CD4-positive, alpha-beta memory T cell (primary cell): ENCODE measurements at regions of chr20 and their contacts with region 1.

Region 1: GRCh38 chr20:64038565-64039292 is 2.7 kb downstream of the C20orf204 start:
- DNase-seq: peak; percentile 65 to 76 (median 71)
- H3K4me3 ChIP-seq: peak overlapping the region; percentile 29 to 72
- H3K4me3 Mint-ChIP-seq: peak overlapping the region; percentile 17 to 82 (median 57)
- H3K27ac ChIP-seq: peak overlapping the region; percentile 35
- H3K27ac Mint-ChIP-seq: peak overlapping the region in 2 of 7 donors; percentile 43 to 69
- H3K4me1 ChIP-seq: peaks cover 74% of the 10 kb centered on the region
- H3K4me1 Mint-ChIP-seq: peaks cover 13 to 63% (median 34%) of the 10 kb centered on the region in 4 donors
- H3K27me3 ChIP-seq: no peaks in the 10 kb centered on the region
- H3K27me3 Mint-ChIP-seq: no peaks in the 10 kb centered on the region

Region 2: DNA sequence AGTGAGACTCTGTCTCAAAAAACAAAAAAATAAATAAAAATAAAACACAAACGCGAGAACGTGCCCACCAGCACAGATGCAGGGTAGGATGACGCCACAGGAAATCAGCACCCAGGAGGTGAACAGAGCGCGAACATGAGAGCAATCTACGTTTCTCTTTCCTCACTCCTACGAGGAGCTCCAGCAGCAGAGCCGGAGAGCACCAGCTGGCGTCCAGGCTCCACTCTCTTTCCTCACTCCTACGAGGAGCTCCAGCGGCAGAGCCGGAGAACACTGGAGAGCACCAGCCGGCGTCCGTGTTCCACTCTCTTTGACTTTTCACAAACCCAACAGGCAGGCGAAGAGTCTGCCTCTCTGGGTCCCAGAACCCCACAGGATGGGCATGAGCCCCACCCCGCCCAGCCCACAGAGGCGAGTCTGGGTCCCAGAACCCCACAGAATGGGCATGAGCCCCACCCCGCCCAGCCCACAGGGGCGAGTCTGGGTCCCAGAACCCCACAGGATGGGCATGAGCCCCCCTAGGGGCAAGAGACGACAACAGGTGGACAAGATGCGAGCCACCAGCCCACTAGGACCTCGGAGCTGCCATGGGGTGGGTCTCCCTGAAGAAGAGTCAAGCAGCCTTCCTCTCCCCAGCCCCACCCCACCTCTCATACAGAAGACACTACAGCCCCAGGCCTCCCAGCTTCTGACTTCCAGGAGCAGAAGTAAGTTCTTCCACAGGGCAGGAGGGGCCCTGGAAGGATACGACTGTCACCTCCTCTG is 227.8 kb before region 1 on chr20:
- CTCF ChIA-PET with region 1: no interaction called
- POLR2A ChIA-PET with region 1: no interaction called
- intact Hi-C with region 1: no loop called
- DNase-seq: no peak
- H3K4me3 ChIP-seq: no peak overlapping the region
- H3K4me3 Mint-ChIP-seq: no peak overlapping the region
- H3K27ac ChIP-seq: no peak overlapping the region
- H3K27ac Mint-ChIP-seq: peak overlapping the region in 1 of 7 donors; percentile 31
- H3K4me1 ChIP-seq: no peaks in the 10 kb centered on the region
- H3K4me1 Mint-ChIP-seq: no peaks in the 10 kb centered on the region
- H3K27me3 ChIP-seq: no peaks in the 10 kb centered on the region
- H3K27me3 Mint-ChIP-seq: peaks cover 0 to 2% of the 10 kb centered on the region in 2 donors

Region 3: GRCh38 chr20:63894358-63895201 is 144.1 kb before region 1 on chr20 and contains the start of gene DNAJC5:
- CTCF ChIA-PET with region 1: no interaction called
- POLR2A ChIA-PET with region 1: interaction called, 4 read pairs
- intact Hi-C with region 1: loop called (anchors 5 kb)
- DNase-seq: peak; percentile 95 to 98 (median 98)
- H3K4me3 ChIP-seq: peak within 1 kb of the TSS; percentile 68 to 81
- H3K4me3 Mint-ChIP-seq: peak within 1 kb of the TSS; percentile 92 to 99 (median 94)
- H3K27ac ChIP-seq: peak within 1 kb of the TSS; percentile 66
- H3K27ac Mint-ChIP-seq: peak within 1 kb of the TSS; percentile 93 to 99 (median 97)
- H3K4me1 ChIP-seq: peaks cover 45% of the 10 kb centered on the region
- H3K4me1 Mint-ChIP-seq: peaks cover 28 to 48% (median 40%) of the 10 kb centered on the region in 4 donors
- H3K27me3 ChIP-seq: no peaks in the 10 kb centered on the region
- H3K27me3 Mint-ChIP-seq: no peaks in the 10 kb centered on the region
- total RNA-seq, gene DNAJC5: 53.3 to 54.4 TPM

Region 4: GRCh38 chr20:64027981-64028685 is 10.6 kb before region 1 on chr20:
- CTCF ChIA-PET with region 1: interaction called, 11 read pairs
- POLR2A ChIA-PET with region 1: interaction called, 11 read pairs
- intact Hi-C with region 1: no loop called
- DNase-seq: no peak
- H3K4me3 ChIP-seq: no peak overlapping the region
- H3K4me3 Mint-ChIP-seq: no peak overlapping the region
- H3K27ac ChIP-seq: no peak overlapping the region
- H3K27ac Mint-ChIP-seq: peak overlapping the region in 2 of 7 donors; percentile 5 to 35
- H3K4me1 ChIP-seq: no peaks in the 10 kb centered on the region
- H3K4me1 Mint-ChIP-seq: no peaks in the 10 kb centered on the region
- H3K27me3 ChIP-seq: no peaks in the 10 kb centered on the region
- H3K27me3 Mint-ChIP-seq: no peaks in the 10 kb centered on the region

Region 5: DNA sequence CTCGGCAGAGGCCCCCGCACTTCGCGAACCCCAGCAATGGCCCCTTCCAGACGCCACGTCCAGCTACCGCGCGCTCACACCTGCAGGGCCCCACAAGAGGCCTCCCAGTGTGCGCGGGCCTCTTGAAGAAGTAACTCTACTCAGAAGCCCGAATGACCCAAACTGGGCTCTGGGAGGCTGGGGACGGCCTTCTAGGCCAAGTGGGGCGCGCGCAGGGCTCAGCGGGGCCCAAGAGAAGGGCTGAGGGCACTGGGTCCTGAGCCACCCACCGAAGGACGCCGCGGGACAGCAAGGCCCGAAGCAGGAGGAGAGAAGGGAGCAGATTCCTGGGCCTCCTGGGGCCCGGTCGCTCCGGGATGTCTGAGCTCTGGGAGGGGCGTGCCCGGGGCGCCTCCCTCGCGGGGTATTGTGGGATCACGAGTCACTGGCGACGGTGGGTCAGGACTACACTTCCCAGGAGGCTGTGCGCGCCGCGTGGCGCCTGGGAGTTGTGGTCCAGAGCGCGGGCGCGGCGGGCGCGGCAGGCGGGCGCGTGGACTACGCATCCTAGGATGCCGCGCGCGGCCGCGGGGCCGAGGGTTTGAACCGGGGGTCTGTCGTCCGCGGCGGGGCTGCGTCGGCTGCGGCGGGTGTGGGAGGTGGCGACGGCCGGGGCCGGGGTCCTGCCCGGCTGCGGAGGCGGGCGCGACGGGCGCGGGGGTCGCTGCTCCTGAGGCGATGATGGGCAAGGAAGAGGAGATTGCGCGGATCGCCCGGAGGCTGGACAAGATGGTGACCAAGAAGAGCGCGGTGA is 24.1 kb after region 1 on chr20 and contains the start of gene TCEA2:
- CTCF ChIA-PET with region 1: interaction called, 133 read pairs
- POLR2A ChIA-PET with region 1: interaction called, 22 read pairs
- intact Hi-C with region 1: loop called (anchors 1 kb)
- DNase-seq: peak; percentile 90 to 91 (median 90)
- H3K4me3 ChIP-seq: peak within 1 kb of the TSS; percentile 42 to 57
- H3K4me3 Mint-ChIP-seq: peak within 1 kb of the TSS; percentile 80 to 93 (median 88)
- H3K27ac ChIP-seq: peak within 1 kb of the TSS; percentile 59
- H3K27ac Mint-ChIP-seq: peak within 1 kb of the TSS; percentile 50 to 92 (median 86)
- H3K4me1 ChIP-seq: peaks cover 57% of the 10 kb centered on the region
- H3K4me1 Mint-ChIP-seq: peaks cover 21 to 47% (median 35%) of the 10 kb centered on the region in 4 donors
- H3K27me3 ChIP-seq: no peaks in the 10 kb centered on the region
- H3K27me3 Mint-ChIP-seq: no peaks in the 10 kb centered on the region
- total RNA-seq, gene TCEA2: 43.3 to 45.9 TPM

Region 6: DNA sequence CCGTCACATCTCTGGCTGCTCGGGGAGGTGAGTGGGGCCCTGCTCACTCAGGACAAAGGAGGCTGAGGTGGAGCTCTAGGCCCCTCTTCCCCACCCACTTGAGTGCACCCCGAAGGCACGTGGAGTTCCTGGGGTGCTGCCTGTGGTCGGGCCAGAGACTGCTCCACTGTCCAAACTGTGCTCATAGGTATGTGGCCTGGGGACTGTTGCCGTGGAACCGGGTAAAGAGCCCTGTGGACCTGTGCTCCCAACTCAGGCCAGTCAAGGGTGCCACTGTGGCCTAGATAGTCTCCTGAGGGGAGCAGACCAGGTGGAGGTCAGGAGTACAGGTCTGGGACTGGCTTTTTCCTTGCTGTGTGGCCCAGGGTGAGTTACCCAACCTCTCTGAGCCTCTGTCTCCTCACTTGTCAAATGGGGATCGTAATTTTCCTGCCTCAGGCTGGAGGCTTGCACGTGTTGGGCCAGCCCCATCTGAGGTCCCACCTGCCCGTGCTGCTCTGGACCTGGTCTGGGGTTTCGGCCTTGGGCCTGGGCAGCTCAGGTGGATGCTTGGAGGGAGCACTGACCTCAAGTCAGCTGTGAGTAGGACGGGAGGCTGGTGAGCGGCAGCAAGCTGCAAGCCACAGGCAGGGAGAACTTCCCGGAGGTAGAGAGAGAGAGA is 81.1 kb after region 1 on chr20:
- CTCF ChIA-PET with region 1: interaction called, 66 read pairs
- POLR2A ChIA-PET with region 1: interaction called, 26 read pairs
- intact Hi-C with region 1: loop called (anchors 1 kb)
- DNase-seq: no peak
- H3K4me3 ChIP-seq: peak overlapping the region; percentile 12 to 47
- H3K4me3 Mint-ChIP-seq: peak overlapping the region; percentile 32 to 82 (median 77)
- H3K27ac ChIP-seq: no peak overlapping the region
- H3K27ac Mint-ChIP-seq: peak overlapping the region in 5 of 7 donors; percentile 48 to 91 (median 79)
- H3K4me1 ChIP-seq: peaks cover 11% of the 10 kb centered on the region
- H3K4me1 Mint-ChIP-seq: peaks cover 3 to 10% (median 7%) of the 10 kb centered on the region in 4 donors
- H3K27me3 ChIP-seq: peaks cover 10% of the 10 kb centered on the region
- H3K27me3 Mint-ChIP-seq: peaks cover 5 to 10% of the 10 kb centered on the region in 2 donors

Region 7: GRCh38 chr20:64151634-64152530 is 113.2 kb after region 1 on chr20:
- CTCF ChIA-PET with region 1: no interaction called
- POLR2A ChIA-PET with region 1: no interaction called
- intact Hi-C with region 1: no loop called
- DNase-seq: no peak
- H3K4me3 ChIP-seq: no peak overlapping the region
- H3K4me3 Mint-ChIP-seq: no peak overlapping the region
- H3K27ac ChIP-seq: no peak overlapping the region
- H3K27ac Mint-ChIP-seq: no peak overlapping the region
- H3K4me1 ChIP-seq: no peaks in the 10 kb centered on the region
- H3K4me1 Mint-ChIP-seq: no peaks in the 10 kb centered on the region
- H3K27me3 ChIP-seq: no peaks in the 10 kb centered on the region
- H3K27me3 Mint-ChIP-seq: peaks cover 3 to 4% of the 10 kb centered on the region in 2 donors